AG04450 (cell line): ENCODE measurements at regions of chr2 and their contacts with region 1.

Region 1: GRCh38 chr2:157327621-157328500 is 2.2 kb upstream of the ERMN start:
- DNase-seq: peak; percentile 53
- H3K4me3 ChIP-seq: no peak overlapping the region
- H3K27ac ChIP-seq: no peak overlapping the region
- H3K27me3 ChIP-seq: no peaks in the 10 kb centered on the region
- CTCF ChIP-seq: peak; percentile 97

Region 2: GRCh38 chr2:156756516-156756915 is 571.3 kb before region 1 on chr2:
- CTCF ChIA-PET with region 1: no interaction called
- POLR2A ChIA-PET with region 1: no interaction called
- DNase-seq: no peak
- H3K4me3 ChIP-seq: no peak overlapping the region
- H3K27ac ChIP-seq: no peak overlapping the region
- H3K27me3 ChIP-seq: no peaks in the 10 kb centered on the region
- CTCF ChIP-seq: no peak

Region 3: DNA sequence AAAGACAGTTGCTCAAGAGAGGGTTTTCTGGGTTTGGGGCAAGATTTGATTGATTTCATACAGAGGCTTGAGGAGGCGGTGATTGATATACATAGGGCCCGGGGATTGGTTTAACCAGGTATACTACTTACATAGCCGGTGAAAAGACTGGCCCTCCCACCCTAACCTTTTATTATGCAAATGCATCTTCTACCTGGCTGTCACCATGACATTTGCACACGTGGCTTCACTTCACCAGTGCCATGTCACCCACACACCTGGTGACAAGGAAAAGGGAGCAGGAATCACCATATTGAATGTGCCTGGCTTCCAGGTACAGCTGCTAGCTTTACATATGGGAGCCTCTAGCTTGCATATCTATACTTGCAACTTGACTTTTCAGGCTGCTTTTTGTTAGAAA is 12.0 kb before region 1 on chr2:
- CTCF ChIA-PET with region 1: interaction called, 299 read pairs
- POLR2A ChIA-PET with region 1: no interaction called
- DNase-seq: no peak
- H3K4me3 ChIP-seq: no peak overlapping the region
- H3K27ac ChIP-seq: no peak overlapping the region
- H3K27me3 ChIP-seq: no peaks in the 10 kb centered on the region
- CTCF ChIP-seq: no peak

Region 4: GRCh38 chr2:157349949-157350515 is 22.2 kb after region 1 on chr2:
- CTCF ChIA-PET with region 1: interaction called, 96 read pairs
- POLR2A ChIA-PET with region 1: no interaction called
- DNase-seq: no peak
- H3K4me3 ChIP-seq: no peak overlapping the region
- H3K27ac ChIP-seq: no peak overlapping the region
- H3K27me3 ChIP-seq: no peaks in the 10 kb centered on the region
- CTCF ChIP-seq: no peak